ENCODE measurements at regions of chr11 and their contacts with region 1.

Region 1: GRCh38 chr11:43311791-43312607 is at the start of gene API5:
- DNase-seq: peak; percentile 97
- ATAC-seq: peak; percentile 97
- H3K4me3 Mint-ChIP-seq: peak within 1 kb of the TSS; percentile 95
- H3K27ac Mint-ChIP-seq: peak within 1 kb of the TSS; percentile 96
- H3K4me1 Mint-ChIP-seq: peaks cover 42% of the 10 kb centered on the region
- H3K27me3 Mint-ChIP-seq: no peaks in the 10 kb centered on the region
- total RNA-seq, gene API5: 133 to 163 TPM

Region 2: GRCh38 chr11:43138621-43139140 is 173.3 kb before region 1 on chr11:
- CTCF ChIA-PET with region 1: no interaction called
- POLR2A ChIA-PET with region 1: no interaction called
- intact Hi-C with region 1: no loop called
- DNase-seq: no peak
- ATAC-seq: no peak
- H3K4me3 Mint-ChIP-seq: no peak overlapping the region
- H3K27ac Mint-ChIP-seq: no peak overlapping the region
- H3K4me1 Mint-ChIP-seq: no peaks in the 10 kb centered on the region
- H3K27me3 Mint-ChIP-seq: peaks cover 3% of the 10 kb centered on the region

Region 3: DNA sequence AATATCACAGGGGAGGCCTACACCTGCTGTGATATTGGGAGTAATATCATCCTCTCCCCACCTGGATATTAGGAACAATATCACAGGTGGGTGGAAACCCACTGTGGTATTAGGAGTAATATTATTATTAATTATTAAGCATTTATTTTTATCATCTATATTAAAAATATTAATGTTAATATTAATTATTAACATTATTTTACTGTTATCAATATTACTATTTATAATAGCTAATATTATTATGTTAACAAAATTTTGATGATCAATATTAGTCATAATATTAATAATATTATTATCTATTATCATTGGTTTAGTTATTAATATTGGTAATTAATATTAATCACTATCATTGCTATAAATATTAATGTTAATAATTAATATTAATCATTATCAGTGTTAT is 161.3 kb before region 1 on chr11:
- CTCF ChIA-PET with region 1: no interaction called
- POLR2A ChIA-PET with region 1: no interaction called
- intact Hi-C with region 1: loop called in 1 of 2 experiments (anchors 10 kb)
- DNase-seq: no peak
- ATAC-seq: no peak
- H3K4me3 Mint-ChIP-seq: no peak overlapping the region
- H3K27ac Mint-ChIP-seq: no peak overlapping the region
- H3K4me1 Mint-ChIP-seq: no peaks in the 10 kb centered on the region
- H3K27me3 Mint-ChIP-seq: no peaks in the 10 kb centered on the region

Region 4: GRCh38 chr11:43393765-43394355 is 81.9 kb after region 1 on chr11:
- CTCF ChIA-PET with region 1: no interaction called
- POLR2A ChIA-PET with region 1: no interaction called
- intact Hi-C with region 1: loop called in 1 of 2 experiments (anchors 5 kb)
- DNase-seq: no peak
- ATAC-seq: no peak
- H3K4me3 Mint-ChIP-seq: no peak overlapping the region
- H3K27ac Mint-ChIP-seq: no peak overlapping the region
- H3K4me1 Mint-ChIP-seq: peaks cover 40% of the 10 kb centered on the region
- H3K27me3 Mint-ChIP-seq: no peaks in the 10 kb centered on the region

Region 5: GRCh38 chr11:43419460-43419859 is 107.5 kb after region 1 on chr11:
- CTCF ChIA-PET with region 1: interaction called, 5 read pairs
- POLR2A ChIA-PET with region 1: interaction called, 3 read pairs
- intact Hi-C with region 1: loop called (anchors 1 to 2 kb)
- DNase-seq: peak; percentile 56
- ATAC-seq: peak; percentile 69
- H3K4me3 Mint-ChIP-seq: no peak overlapping the region
- H3K27ac Mint-ChIP-seq: no peak overlapping the region
- H3K4me1 Mint-ChIP-seq: peaks cover 2% of the 10 kb centered on the region
- H3K27me3 Mint-ChIP-seq: no peaks in the 10 kb centered on the region

Region 6: GRCh38 chr11:43643898-43644620 is 332.1 kb after region 1 on chr11:
- CTCF ChIA-PET with region 1: no interaction called
- POLR2A ChIA-PET with region 1: no interaction called
- intact Hi-C with region 1: loop called in 1 of 2 experiments (anchors 2 kb)
- DNase-seq: peak; percentile 94
- ATAC-seq: peak; percentile 99
- H3K4me3 Mint-ChIP-seq: peak overlapping the region; percentile 78
- H3K27ac Mint-ChIP-seq: peak overlapping the region; percentile 89
- H3K4me1 Mint-ChIP-seq: peaks cover 19% of the 10 kb centered on the region
- H3K27me3 Mint-ChIP-seq: peaks cover 15% of the 10 kb centered on the region

Region 7: GRCh38 chr11:43880640-43881159 is 568.7 kb after region 1 on chr11 and contains the start of gene ALKBH3:
- CTCF ChIA-PET with region 1: no interaction called
- POLR2A ChIA-PET with region 1: interaction called, 3 read pairs
- intact Hi-C with region 1: loop called in 1 of 2 experiments (anchors 5 kb)
- DNase-seq: peak; percentile 96
- ATAC-seq: peak; percentile 99
- H3K4me3 Mint-ChIP-seq: peak within 1 kb of the TSS; percentile 90
- H3K27ac Mint-ChIP-seq: peak within 1 kb of the TSS; percentile 84
- H3K4me1 Mint-ChIP-seq: peaks cover 23% of the 10 kb centered on the region
- H3K27me3 Mint-ChIP-seq: peaks cover 8% of the 10 kb centered on the region
- total RNA-seq, gene ALKBH3: 41.9 to 42.3 TPM